ENCODE measurements at regions of chr5 and their contacts with region 1.

Region 1: DNA sequence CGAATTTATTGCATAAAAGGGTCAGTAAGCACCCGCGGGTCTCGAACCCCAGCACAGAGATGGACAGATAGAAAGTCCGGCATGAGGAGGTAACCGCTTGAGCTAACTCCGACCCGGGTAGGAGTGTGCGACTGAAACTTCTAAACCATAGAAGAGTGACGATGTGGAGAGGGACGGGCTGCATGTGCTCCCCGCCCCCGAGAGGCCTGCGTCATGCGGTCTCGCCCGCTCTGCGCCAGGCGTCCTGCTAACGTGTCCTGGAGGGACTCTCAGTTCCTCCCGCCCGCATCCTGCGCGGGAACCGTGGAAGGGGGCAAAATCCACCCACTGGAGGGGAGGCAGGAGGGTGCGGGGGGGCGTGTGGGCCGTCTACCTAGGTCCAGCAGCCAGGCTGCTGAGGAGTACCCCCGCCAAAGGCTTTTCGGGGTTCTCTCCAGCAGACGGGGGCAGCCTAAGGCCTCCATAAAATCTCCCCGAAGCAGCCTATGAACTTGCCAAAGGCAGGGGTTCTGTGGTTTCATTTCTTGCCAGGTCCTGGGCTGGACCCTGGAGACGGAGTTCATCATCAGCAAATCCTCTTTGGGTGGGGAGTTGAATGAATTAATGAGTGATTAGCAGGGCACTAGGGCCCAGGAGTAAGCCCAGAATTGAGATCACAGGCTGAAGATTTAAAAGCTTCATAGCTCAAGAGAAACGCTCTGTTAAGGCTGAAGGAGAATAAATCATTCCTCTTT is 51.9 kb downstream of the TGFBI start:
- DNase-seq: peak; percentile 92 to 95
- ATAC-seq: peak; percentile 96
- H3K4me3 ChIP-seq: peak overlapping the region in 1 of 2 donors; percentile 37
- H3K27ac ChIP-seq: peak overlapping the region in 1 of 2 donors; percentile 22
- H3K4me1 ChIP-seq: no peaks in the 10 kb centered on the region
- H3K27me3 ChIP-seq: no peaks in the 10 kb centered on the region

Region 2: DNA sequence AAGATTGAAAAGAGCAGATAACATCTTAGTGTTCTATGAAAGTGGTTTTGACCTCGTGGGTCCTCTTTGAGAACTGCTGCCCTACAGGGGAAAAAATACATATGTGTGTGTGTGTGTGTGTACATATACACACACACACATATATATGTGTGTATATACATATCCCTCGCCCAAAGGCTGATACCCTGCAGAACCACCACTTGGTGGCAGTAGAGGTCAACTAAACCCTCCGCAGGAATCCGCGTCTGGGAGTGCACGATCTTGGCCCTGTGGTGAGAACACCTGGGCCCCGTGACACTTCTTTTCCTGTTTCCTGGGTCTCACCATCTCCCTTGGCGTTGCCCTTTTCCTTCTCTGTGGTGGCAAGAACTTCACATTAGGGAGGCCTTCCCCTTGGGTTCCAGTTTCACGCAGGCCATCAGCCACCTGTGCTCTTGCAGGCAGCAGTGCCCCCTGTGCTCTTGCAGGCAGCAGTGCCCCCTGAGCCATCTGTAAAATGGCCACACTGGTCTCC is 193.2 kb before region 1 on chr5:
- intact Hi-C with region 1: loop called (anchors 1 to 5 kb)
- DNase-seq: no peak
- ATAC-seq: peak; percentile 73
- H3K4me3 ChIP-seq: no peak overlapping the region
- H3K27ac ChIP-seq: no peak overlapping the region
- H3K4me1 ChIP-seq: no peaks in the 10 kb centered on the region
- H3K27me3 ChIP-seq: no peaks in the 10 kb centered on the region

Region 3: GRCh38 chr5:135944967-135945560 is 135.6 kb before region 1 on chr5:
- intact Hi-C with region 1: loop called (anchors 1 to 2 kb)
- DNase-seq: no peak
- ATAC-seq: peak; percentile 73
- H3K4me3 ChIP-seq: no peak overlapping the region
- H3K27ac ChIP-seq: no peak overlapping the region
- H3K4me1 ChIP-seq: no peaks in the 10 kb centered on the region
- H3K27me3 ChIP-seq: no peaks in the 10 kb centered on the region

Region 4: GRCh38 chr5:135964670-135965320 is 115.9 kb before region 1 on chr5:
- intact Hi-C with region 1: no loop called
- DNase-seq: no peak
- ATAC-seq: no peak
- H3K4me3 ChIP-seq: no peak overlapping the region
- H3K27ac ChIP-seq: no peak overlapping the region
- H3K4me1 ChIP-seq: peaks cover 0 to 2% of the 10 kb centered on the region in 2 donors
- H3K27me3 ChIP-seq: no peaks in the 10 kb centered on the region

Region 5: GRCh38 chr5:136132557-136133221 is 52.0 kb after region 1 on chr5 and contains the start of gene SMAD5:
- intact Hi-C with region 1: loop called in 1 of 2 experiments (anchors 5 kb)
- DNase-seq: peak; percentile 98 to 99
- ATAC-seq: peak; percentile 99
- H3K4me3 ChIP-seq: peak within 1 kb of the TSS; percentile 44 to 96
- H3K27ac ChIP-seq: peak within 1 kb of the TSS; percentile 85 to 91
- H3K4me1 ChIP-seq: peaks cover 0 to 2% of the 10 kb centered on the region in 2 donors
- H3K27me3 ChIP-seq: no peaks in the 10 kb centered on the region
- total RNA-seq, gene SMAD5: 85.2 to 85.8 TPM

Region 6: GRCh38 chr5:136174021-136174659 is 93.5 kb after region 1 on chr5:
- intact Hi-C with region 1: loop called (anchors 2 to 10 kb)
- DNase-seq: no peak
- ATAC-seq: no peak
- H3K4me3 ChIP-seq: no peak overlapping the region
- H3K27ac ChIP-seq: no peak overlapping the region
- H3K4me1 ChIP-seq: no peaks in the 10 kb centered on the region
- H3K27me3 ChIP-seq: no peaks in the 10 kb centered on the region

Region 7: GRCh38 chr5:136249678-136250266 is 169.1 kb after region 1 on chr5:
- intact Hi-C with region 1: no loop called
- DNase-seq: peak; percentile 59 to 80
- ATAC-seq: peak; percentile 58
- H3K4me3 ChIP-seq: no peak overlapping the region
- H3K27ac ChIP-seq: no peak overlapping the region
- H3K4me1 ChIP-seq: no peaks in the 10 kb centered on the region
- H3K27me3 ChIP-seq: no peaks in the 10 kb centered on the region